Motor neuron (in vitro differentiated cells): ENCODE measurements at regions of chr10 and their contacts with region 1.

Region 1: GRCh38 chr10:102815790-102816549 is 21.2 kb downstream of the CYP17A1 start:
- ATAC-seq: peak in 7 of 8 experiments; percentile 6 to 95 (median 60)
- H3K4me3 ChIP-seq: no peak overlapping the region
- H3K27ac ChIP-seq: no peak overlapping the region
- H3K4me1 ChIP-seq: no peaks in the 10 kb centered on the region

Region 2: GRCh38 chr10:102752934-102753664 is 62.9 kb before region 1 on chr10:
- in situ Hi-C with region 1: loop called in 1 of 9 experiments (anchors 10 kb)
- ATAC-seq: peak; percentile 30 to 97 (median 67)
- H3K4me3 ChIP-seq: no peak overlapping the region
- H3K27ac ChIP-seq: no peak overlapping the region
- H3K4me1 ChIP-seq: peaks cover 0 to 6% of the 10 kb centered on the region in 2 donors